Activated CD4-positive, alpha-beta memory T cell treated with anti-CD3 and anti-CD28 coated beads, Interleukin-2, amount 10 ng/mL, durations not matched to agents 7 days and 5 days (primary cell): ENCODE measurements at regions of chr9 and their contacts with region 1.

Region 1: DNA sequence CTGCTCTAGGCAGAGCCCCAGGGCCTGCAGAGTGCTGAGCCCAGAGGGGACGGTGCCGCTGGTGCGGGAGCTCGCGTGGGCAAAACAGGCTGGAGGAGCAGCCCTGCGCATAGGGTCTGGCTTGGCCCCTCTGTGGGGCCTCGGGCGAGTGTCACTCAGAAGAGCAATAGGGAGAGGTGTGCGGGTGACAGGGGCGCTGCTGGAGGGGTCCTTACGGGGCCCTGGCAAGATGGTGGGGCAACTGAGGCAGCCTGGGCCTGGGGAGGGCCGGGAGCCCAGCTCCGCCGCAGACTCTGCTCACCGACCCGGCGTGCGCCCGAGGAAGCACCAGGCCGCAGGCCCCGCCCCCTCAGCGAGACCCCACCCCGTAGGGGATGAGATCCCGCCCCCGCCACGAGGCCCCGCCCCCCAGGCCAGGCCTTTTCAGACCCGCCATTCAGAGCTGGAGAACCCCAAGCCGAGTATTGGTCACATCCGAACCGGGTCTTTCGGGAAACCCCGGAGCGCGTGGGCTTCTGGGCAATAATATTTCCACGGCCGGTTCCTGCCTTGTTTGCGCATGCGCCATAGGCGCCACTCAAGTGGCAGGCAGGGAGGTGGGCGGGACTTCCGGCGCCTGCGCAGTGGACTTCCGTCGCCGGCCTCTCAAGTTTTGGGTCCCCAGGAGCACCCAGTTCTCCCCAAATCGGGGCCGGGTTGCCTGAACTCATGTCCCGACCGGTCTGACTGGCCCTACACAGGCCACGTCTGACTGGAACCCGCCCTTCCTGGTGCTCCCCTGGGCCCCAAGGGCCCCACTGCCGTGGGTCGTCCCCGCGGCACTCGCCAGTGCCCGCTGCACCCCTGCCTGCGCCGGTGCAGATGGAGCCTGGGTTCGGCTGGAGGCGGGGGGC is 1.3 kb upstream of the RNF208 start:
- DNase-seq: peak; percentile 99
- H3K4me3 Mint-ChIP-seq: peak overlapping the region; percentile 74
- H3K27ac Mint-ChIP-seq: peak overlapping the region; percentile 79
- H3K4me1 Mint-ChIP-seq: peaks cover 27% of the 10 kb centered on the region
- H3K27me3 Mint-ChIP-seq: no peaks in the 10 kb centered on the region

Region 2: DNA sequence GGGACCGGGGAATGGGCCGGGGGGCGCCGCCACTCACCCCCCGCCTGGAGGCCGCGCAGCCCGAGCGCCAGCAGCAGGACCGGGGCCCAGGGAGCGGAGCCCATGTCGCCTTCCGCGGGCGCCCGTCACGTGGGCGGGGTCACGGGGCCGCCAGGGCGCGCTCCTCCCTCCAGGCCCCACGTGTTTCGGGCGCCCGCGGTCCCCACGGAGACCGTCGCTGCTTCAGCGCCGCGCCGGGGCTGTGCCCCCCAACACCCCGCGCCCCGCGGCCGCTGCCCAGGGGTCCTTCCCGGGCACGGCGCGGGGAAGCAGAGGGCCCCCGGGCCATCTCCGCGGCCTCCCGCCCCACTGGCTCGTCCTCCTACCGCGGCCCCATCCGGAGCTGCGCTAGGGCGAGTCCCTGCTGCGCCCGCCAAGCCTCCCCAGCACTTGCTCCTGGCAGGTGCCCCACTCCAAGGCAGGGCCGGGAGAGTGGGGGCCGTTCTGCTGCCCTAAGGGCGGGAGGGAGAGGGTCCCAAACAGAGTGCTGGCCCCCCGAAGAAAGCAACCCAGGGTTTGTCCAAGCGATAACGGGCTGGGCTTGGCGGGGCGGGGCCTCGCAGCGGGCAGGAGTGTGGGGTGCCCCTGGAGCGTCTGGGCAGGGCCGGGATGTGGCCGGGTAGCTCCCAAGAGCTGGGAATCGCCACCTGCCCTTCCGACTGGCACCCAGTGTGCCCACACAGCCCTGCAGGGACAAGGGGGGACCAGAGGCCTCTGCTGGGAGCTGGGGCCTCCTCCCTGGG is 108.5 kb before region 1 on chr9 and contains the start of gene DPP7:
- CTCF ChIA-PET with region 1: interaction called, 16 read pairs
- POLR2A ChIA-PET with region 1: interaction called, 7 read pairs
- DNase-seq: peak; percentile 84
- H3K4me3 Mint-ChIP-seq: peak within 1 kb of the TSS; percentile 69
- H3K27ac Mint-ChIP-seq: peak within 1 kb of the TSS; percentile 56
- H3K4me1 Mint-ChIP-seq: peaks cover 5% of the 10 kb centered on the region
- H3K27me3 Mint-ChIP-seq: no peaks in the 10 kb centered on the region
- total RNA-seq, gene DPP7: 253 to 257 TPM

Region 3: DNA sequence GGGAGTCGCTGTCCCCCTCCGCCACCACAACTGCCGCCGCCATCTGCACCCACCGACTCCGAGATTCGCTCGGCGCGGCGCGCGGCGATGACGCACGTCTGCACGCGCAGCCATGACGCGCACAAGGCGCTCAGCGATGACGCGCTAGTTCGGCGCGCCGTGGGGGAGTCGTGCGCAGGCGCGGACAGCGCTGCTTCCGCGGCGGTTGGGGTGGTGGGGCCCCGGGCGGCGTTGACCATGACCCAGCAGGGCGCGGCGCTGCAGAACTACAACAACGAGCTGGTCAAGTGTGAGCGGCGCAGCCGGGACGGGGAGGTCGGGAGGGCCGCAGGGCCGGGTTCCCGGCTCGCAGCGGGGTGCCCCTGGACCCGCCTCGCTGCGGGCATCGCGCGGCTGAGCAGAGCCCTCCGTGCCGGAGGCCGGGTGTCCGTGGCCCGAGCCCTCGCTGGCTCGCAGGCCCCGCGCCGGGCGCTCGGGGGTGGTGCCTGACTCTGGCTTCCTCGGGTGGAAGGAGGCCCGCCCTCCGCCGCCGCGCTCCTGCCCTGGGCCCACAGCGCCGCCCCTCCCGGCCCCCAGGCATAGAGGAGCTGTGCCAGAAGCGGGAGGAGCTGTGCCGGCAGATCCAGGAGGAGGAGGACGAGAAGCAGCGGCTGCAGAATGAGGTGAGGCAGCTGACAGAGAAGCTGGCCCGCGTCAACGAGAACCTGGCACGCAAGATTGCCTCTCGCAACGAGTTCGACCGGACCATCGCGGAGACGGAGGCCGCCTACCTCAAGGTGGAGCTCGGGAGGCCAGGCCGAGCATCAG is 34.6 kb before region 1 on chr9 and contains the starts of genes ANAPC2 and SSNA1:
- CTCF ChIA-PET with region 1: interaction called, 12 read pairs
- POLR2A ChIA-PET with region 1: interaction called, 30 read pairs
- DNase-seq: peak; percentile 94
- H3K4me3 Mint-ChIP-seq: peak within 1 kb of the TSS; percentile 93
- H3K27ac Mint-ChIP-seq: peak within 1 kb of the TSS; percentile 97
- H3K4me1 Mint-ChIP-seq: peaks cover 40% of the 10 kb centered on the region
- H3K27me3 Mint-ChIP-seq: no peaks in the 10 kb centered on the region
- total RNA-seq, gene ANAPC2: 53.3 to 57.8 TPM
- total RNA-seq, gene SSNA1: 70.0 to 76.3 TPM

Region 4: GRCh38 chr9:137200311-137201204 is 22.8 kb before region 1 on chr9 and contains the start of gene TPRN:
- CTCF ChIA-PET with region 1: interaction called, 8 read pairs
- POLR2A ChIA-PET with region 1: interaction called, 97 read pairs
- DNase-seq: peak; percentile 99
- H3K4me3 Mint-ChIP-seq: peak within 1 kb of the TSS; percentile 78
- H3K27ac Mint-ChIP-seq: peak within 1 kb of the TSS; percentile 70
- H3K4me1 Mint-ChIP-seq: peaks cover 35% of the 10 kb centered on the region
- H3K27me3 Mint-ChIP-seq: no peaks in the 10 kb centered on the region
- total RNA-seq, gene TPRN: 8.5 to 9.4 TPM